Activated CD4-positive, alpha-beta T cell treated with anti-CD3 and anti-CD28 coated beads for 36 hours (primary cell): ENCODE measurements at regions of chr7 and their contacts with region 1.

Region 1: DNA sequence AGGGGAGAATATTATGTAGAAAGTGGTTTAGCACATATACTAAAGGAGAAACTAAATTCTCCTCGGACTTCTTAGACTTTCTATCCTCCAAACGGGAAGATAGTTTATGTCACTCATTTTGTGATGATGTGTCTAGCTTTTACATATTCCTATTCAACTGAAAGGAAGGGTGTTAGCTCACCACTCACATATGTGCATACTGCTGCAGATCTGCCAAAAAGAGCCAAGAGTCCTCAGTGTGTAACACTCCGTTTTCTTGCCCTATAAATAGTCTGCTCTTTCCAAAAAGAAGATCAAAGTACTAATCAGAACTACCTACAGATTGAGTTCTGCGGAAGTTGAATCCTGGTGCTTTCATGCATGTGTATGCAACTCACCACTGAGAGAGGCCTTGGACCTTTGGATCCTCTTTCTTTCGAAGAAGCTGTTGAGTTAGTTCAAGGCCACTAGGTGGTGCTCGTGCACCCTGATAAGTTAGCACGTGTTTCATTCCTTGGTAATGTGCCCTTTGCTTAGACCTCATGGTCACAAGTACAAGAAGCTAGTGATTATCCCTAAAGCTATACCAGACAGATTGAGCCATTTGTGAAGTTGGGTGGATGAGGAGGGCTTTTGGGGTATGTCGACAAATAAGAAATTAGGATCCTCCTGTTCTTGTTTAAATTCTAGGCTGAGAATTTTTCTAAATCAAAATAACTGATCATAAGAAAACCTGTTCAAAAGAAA is 14.1 kb downstream of the YAE1 start:
- DNase-seq: peak; percentile 85
- ATAC-seq: peak; percentile 94
- H3K4me3 Mint-ChIP-seq: no peak overlapping the region
- H3K27ac Mint-ChIP-seq: peak overlapping the region; percentile 72
- H3K4me1 Mint-ChIP-seq: peaks cover 11% of the 10 kb centered on the region
- H3K27me3 Mint-ChIP-seq: no peaks in the 10 kb centered on the region

Region 2: GRCh38 chr7:39594988-39595620 is 14.8 kb after region 1 on chr7:
- CTCF ChIA-PET with region 1: interaction called, 46 read pairs
- POLR2A ChIA-PET with region 1: no interaction called
- intact Hi-C with region 1: no loop called
- DNase-seq: no peak
- ATAC-seq: no peak
- H3K4me3 Mint-ChIP-seq: no peak overlapping the region
- H3K27ac Mint-ChIP-seq: no peak overlapping the region
- H3K4me1 Mint-ChIP-seq: peaks cover 27% of the 10 kb centered on the region
- H3K27me3 Mint-ChIP-seq: peaks cover 2% of the 10 kb centered on the region

Region 3: DNA sequence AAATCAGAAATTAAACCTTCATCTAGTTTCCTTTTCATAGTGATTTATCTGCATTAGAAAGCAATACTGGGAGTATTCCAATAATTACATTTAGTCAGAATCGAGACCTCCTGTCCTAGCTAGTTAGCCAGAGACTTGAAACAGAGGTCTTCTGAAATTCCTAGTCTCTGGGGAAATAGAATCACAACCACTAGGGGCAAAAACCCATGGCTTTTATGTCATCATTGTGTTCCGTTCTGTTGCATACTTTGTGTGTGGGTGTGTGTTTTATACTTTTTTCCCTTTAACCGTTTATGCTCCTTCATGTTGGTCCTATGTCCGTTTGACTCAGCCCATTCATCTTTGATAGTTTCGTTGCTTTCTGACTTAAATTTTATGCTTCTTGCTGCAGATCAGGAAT is 122.8 kb after region 1 on chr7:
- CTCF ChIA-PET with region 1: interaction called, 12 read pairs
- POLR2A ChIA-PET with region 1: no interaction called
- intact Hi-C with region 1: no loop called
- DNase-seq: no peak
- ATAC-seq: no peak
- H3K4me3 Mint-ChIP-seq: no peak overlapping the region
- H3K27ac Mint-ChIP-seq: no peak overlapping the region
- H3K4me1 Mint-ChIP-seq: peaks cover 6% of the 10 kb centered on the region
- H3K27me3 Mint-ChIP-seq: no peaks in the 10 kb centered on the region

Region 4: GRCh38 chr7:39746103-39746819 is 165.9 kb after region 1 on chr7:
- CTCF ChIA-PET with region 1: interaction called, 388 read pairs
- POLR2A ChIA-PET with region 1: interaction called, 6 read pairs
- intact Hi-C with region 1: loop called (anchors 1 kb)
- DNase-seq: peak; percentile 75
- ATAC-seq: peak; percentile 30
- H3K4me3 Mint-ChIP-seq: no peak overlapping the region
- H3K27ac Mint-ChIP-seq: no peak overlapping the region
- H3K4me1 Mint-ChIP-seq: peaks cover 13% of the 10 kb centered on the region
- H3K27me3 Mint-ChIP-seq: no peaks in the 10 kb centered on the region

Region 5: DNA sequence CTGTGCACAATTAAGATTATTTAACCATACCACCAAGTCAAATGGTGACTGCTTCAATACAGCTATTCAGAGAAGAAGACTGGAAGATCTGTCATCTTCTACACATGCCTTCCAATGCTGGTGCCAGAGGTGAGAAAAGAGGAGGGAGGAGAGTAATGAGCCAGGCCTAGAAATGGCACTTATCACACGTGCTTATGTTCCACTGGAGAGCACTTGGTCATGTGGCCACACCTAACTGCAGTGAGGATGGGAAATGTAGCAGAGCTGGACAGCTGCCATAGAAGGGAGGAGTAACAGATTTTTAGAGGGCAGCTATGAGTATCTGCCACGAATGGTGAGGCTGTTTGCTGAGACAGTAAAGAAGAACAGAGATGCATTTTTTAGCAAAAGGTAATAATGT is 477.0 kb after region 1 on chr7:
- CTCF ChIA-PET with region 1: interaction called, 12 read pairs
- POLR2A ChIA-PET with region 1: no interaction called
- intact Hi-C with region 1: loop called (anchors 1 to 2 kb)
- DNase-seq: no peak
- ATAC-seq: no peak
- H3K4me3 Mint-ChIP-seq: no peak overlapping the region
- H3K27ac Mint-ChIP-seq: no peak overlapping the region
- H3K4me1 Mint-ChIP-seq: peaks cover 3% of the 10 kb centered on the region
- H3K27me3 Mint-ChIP-seq: no peaks in the 10 kb centered on the region